ENCODE measurements at regions of chr3 and their contacts with region 1.

Region 1: GRCh38 chr3:181700168-181701087 is 11.3 kb upstream of the SOX2 start:
- DNase-seq: peak; percentile 87
- H3K4me3 Mint-ChIP-seq: peak overlapping the region; percentile 63
- H3K27ac Mint-ChIP-seq: no peak overlapping the region
- H3K4me1 Mint-ChIP-seq: peaks cover 53% of the 10 kb centered on the region
- H3K27me3 Mint-ChIP-seq: peaks cover 75% of the 10 kb centered on the region
- CTCF ChIP-seq: peak; percentile 97

Region 2: GRCh38 chr3:180802837-180803236 is 897.6 kb before region 1 on chr3:
- CTCF ChIA-PET with region 1: no interaction called
- intact Hi-C with region 1: loop called (anchors 10 kb)
- DNase-seq: peak; percentile 20
- H3K4me3 Mint-ChIP-seq: no peak overlapping the region
- H3K27ac Mint-ChIP-seq: no peak overlapping the region
- H3K4me1 Mint-ChIP-seq: no peaks in the 10 kb centered on the region
- H3K27me3 Mint-ChIP-seq: no peaks in the 10 kb centered on the region
- CTCF ChIP-seq: peak; percentile 59

Region 3: GRCh38 chr3:181210275-181210674 is 490.2 kb before region 1 on chr3:
- CTCF ChIA-PET with region 1: interaction called, 38 read pairs
- intact Hi-C with region 1: loop called (anchors 1 kb)
- DNase-seq: no peak
- H3K4me3 Mint-ChIP-seq: no peak overlapping the region
- H3K27ac Mint-ChIP-seq: no peak overlapping the region
- H3K4me1 Mint-ChIP-seq: no peaks in the 10 kb centered on the region
- H3K27me3 Mint-ChIP-seq: no peaks in the 10 kb centered on the region
- CTCF ChIP-seq: no peak

Region 4: GRCh38 chr3:181278468-181279238 is 421.8 kb before region 1 on chr3:
- CTCF ChIA-PET with region 1: interaction called, 15 read pairs
- intact Hi-C with region 1: loop called (anchors 2 kb)
- DNase-seq: no peak
- H3K4me3 Mint-ChIP-seq: no peak overlapping the region
- H3K27ac Mint-ChIP-seq: no peak overlapping the region
- H3K4me1 Mint-ChIP-seq: peaks cover 19% of the 10 kb centered on the region
- H3K27me3 Mint-ChIP-seq: no peaks in the 10 kb centered on the region
- CTCF ChIP-seq: no peak

Region 5: DNA sequence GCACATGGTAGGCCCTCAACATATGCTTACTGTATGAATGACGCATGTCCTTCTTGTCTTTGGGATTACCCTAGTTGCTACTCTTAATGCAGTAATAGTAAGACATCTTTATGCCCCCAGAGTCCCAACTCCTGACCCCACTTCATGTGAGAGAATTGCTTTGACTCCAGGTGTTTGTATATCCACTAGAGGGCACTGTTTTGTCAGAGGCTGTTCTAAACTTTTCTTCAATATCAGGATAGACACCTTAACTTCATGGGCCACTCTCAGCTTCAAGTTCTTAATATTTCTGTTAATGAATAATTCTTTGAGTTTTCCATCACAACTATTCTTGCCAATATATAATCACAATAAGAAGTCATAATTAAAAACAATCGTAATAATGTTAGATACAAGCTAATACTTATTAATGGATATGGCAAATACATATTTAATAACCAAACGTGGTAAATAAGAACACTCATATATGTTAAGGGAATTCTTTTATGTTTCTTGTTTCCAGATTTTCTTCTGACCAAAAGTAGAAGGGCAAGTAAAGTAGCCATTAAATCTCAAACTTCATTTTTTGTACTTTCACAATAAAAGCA is 373.7 kb before region 1 on chr3:
- CTCF ChIA-PET with region 1: interaction called, 30 read pairs
- intact Hi-C with region 1: loop called (anchors 1 kb)
- DNase-seq: peak; percentile 30
- H3K4me3 Mint-ChIP-seq: no peak overlapping the region
- H3K27ac Mint-ChIP-seq: no peak overlapping the region
- H3K4me1 Mint-ChIP-seq: peaks cover 18% of the 10 kb centered on the region
- H3K27me3 Mint-ChIP-seq: no peaks in the 10 kb centered on the region
- CTCF ChIP-seq: peak; percentile 82

Region 6: GRCh38 chr3:181567311-181568075 is 132.9 kb before region 1 on chr3:
- CTCF ChIA-PET with region 1: interaction called, 11 read pairs
- intact Hi-C with region 1: loop called (anchors 2 kb)
- DNase-seq: no peak
- H3K4me3 Mint-ChIP-seq: no peak overlapping the region
- H3K27ac Mint-ChIP-seq: no peak overlapping the region
- H3K4me1 Mint-ChIP-seq: no peaks in the 10 kb centered on the region
- H3K27me3 Mint-ChIP-seq: no peaks in the 10 kb centered on the region
- CTCF ChIP-seq: no peak

Region 7: GRCh38 chr3:181630853-181631252 is 69.6 kb before region 1 on chr3:
- CTCF ChIA-PET with region 1: interaction called, 12 read pairs
- intact Hi-C with region 1: no loop called
- DNase-seq: no peak
- H3K4me3 Mint-ChIP-seq: no peak overlapping the region
- H3K27ac Mint-ChIP-seq: no peak overlapping the region
- H3K4me1 Mint-ChIP-seq: peaks cover 19% of the 10 kb centered on the region
- H3K27me3 Mint-ChIP-seq: no peaks in the 10 kb centered on the region
- CTCF ChIP-seq: no peak